HCT116 (cell line): ENCODE measurements at regions of chr18 and their contacts with region 1.

Region 1: DNA sequence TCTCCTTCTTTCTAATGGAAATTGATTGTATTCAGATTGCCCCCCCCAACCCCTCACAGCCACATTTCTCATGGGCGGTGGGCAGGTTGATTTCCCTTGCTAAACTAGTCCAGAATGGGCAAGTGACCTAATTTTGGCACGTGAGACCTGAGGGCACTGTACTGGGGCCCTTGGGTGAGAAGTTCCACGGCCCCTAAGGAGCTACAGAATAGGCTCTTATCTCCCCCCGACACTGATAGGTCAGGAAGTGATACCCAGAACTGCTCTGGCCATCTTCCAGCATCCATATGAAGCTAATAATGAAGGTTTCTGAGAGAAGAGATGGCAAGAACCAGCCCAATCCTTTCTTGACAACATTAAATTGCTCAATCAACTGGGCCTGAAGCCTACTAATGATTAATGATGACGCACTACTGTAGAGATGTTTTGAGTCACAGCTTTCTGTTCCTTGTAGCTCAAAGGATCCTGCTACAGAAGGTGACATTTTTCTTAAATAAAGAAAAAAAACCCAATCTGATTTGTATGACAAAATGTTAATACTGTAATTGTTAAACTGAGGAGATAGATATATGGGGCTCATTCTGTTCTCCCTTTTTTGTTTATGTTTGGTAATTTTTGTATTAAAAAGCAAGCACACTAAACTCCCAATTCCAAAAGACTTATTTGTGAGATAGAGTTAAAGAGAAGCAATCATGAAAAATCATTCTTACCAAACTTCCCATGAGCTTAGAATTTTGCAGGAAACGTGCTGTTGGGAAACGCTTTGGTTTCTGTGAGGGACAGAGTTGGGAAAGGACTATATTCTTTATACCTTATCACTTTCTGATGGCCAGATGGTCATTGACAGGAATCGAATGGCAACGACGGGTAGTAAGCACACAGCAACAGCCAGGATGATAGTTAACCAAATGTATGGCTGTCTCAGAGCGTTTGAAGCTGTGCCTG is 28.2 kb upstream of the NARS1 start:
- DNase-seq: no peak
- ATAC-seq: no peak
- H3K4me3 ChIP-seq: no peak overlapping the region
- H3K27ac ChIP-seq: no peak overlapping the region
- H3K4me1 ChIP-seq: no peaks in the 10 kb centered on the region
- H3K27me3 ChIP-seq: no peaks in the 10 kb centered on the region
- CTCF ChIP-seq: no peak
- POLR2A ChIP-seq: no peak
- RAD21 ChIP-seq: no peak

Region 2: DNA sequence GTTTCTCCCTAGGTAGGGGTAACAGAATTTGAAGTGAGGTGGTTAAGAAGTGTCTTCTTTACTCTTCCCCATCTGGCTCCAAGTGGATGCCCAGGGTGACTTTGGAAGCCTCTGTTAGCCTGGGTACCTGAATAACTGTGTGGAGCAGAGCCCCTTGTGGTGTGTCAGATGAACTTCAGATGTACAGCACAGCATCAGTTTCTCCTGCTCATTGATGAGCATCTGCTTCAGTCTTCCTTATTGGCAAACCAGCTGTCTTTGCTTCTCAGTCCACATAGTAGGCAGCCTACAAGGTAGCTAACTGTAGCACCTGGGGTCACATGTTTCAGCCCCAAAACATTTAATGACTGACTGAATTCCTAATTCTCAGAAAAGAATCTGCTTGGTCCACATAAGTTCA is 209.5 kb after region 1 on chr18:
- CTCF ChIA-PET with region 1: no interaction called
- POLR2A ChIA-PET with region 1: no interaction called
- RAD21 ChIA-PET with region 1: no interaction called
- intact Hi-C with region 1: loop called (anchors 10 kb)
- DNase-seq: peak; percentile 32
- ATAC-seq: peak; percentile 94
- H3K4me3 ChIP-seq: no peak overlapping the region
- H3K27ac ChIP-seq: no peak overlapping the region
- H3K4me1 ChIP-seq: no peaks in the 10 kb centered on the region
- H3K27me3 ChIP-seq: no peaks in the 10 kb centered on the region
- CTCF ChIP-seq: peak; percentile 18 to 66 (median 66); a peak in 5 of 6 replicates
- POLR2A ChIP-seq: no peak
- RAD21 ChIP-seq: peak; percentile 60